ENCODE measurements at regions of chr6 and their contacts with region 1.

Region 1: GRCh38 chr6:38493931-38494547 is 145.7 kb downstream of the BTBD9 start:
- DNase-seq: peak; percentile 52
- ATAC-seq: peak; percentile 69
- H3K4me3 ChIP-seq: no peak overlapping the region
- H3K27ac ChIP-seq: no peak overlapping the region
- H3K4me1 ChIP-seq: 0 out of 2 replicates have a peak, but pooled peaks cover 9% of the 10 kb centered on the region
- H3K27me3 ChIP-seq: no peaks in the 10 kb centered on the region
- CTCF ChIP-seq: peak; percentile 70 to 90 (median 74)
- EP300 ChIP-seq: no peak
- POLR2A ChIP-seq: no peak
- RAD21 ChIP-seq: peak; percentile 98

Region 2: GRCh38 chr6:37717836-37718251 is 776.2 kb before region 1 on chr6:
- CTCF ChIA-PET with region 1: no interaction called
- POLR2A ChIA-PET with region 1: no interaction called
- RAD21 ChIA-PET with region 1: no interaction called
- SMC1A ChIA-PET with region 1: no interaction called
- in situ Hi-C with region 1: loop called (anchors 5 kb)
- intact Hi-C with region 1: no loop called
- DNase-seq: no peak
- ATAC-seq: no peak
- H3K4me3 ChIP-seq: no peak overlapping the region
- H3K27ac ChIP-seq: no peak overlapping the region
- H3K4me1 ChIP-seq: no peaks in the 10 kb centered on the region
- H3K27me3 ChIP-seq: peaks cover 0 to 1% of the 10 kb centered on the region in 2 experiments; a peak in 1 of 4 replicates
- CTCF ChIP-seq: no peak
- EP300 ChIP-seq: no peak
- POLR2A ChIP-seq: no peak
- RAD21 ChIP-seq: no peak

Region 3: GRCh38 chr6:38018755-38019165 is 475.3 kb before region 1 on chr6:
- CTCF ChIA-PET with region 1: interaction called, 12 read pairs
- POLR2A ChIA-PET with region 1: no interaction called
- RAD21 ChIA-PET with region 1: interaction called, 6 read pairs
- SMC1A ChIA-PET with region 1: interaction called, 6 read pairs
- in situ Hi-C with region 1: no loop called
- intact Hi-C with region 1: no loop called
- DNase-seq: no peak
- ATAC-seq: no peak
- H3K4me3 ChIP-seq: no peak overlapping the region
- H3K27ac ChIP-seq: no peak overlapping the region
- H3K4me1 ChIP-seq: no peaks in the 10 kb centered on the region
- H3K27me3 ChIP-seq: no peaks in the 10 kb centered on the region
- CTCF ChIP-seq: 0 out of 6 replicates have a peak, but pooled peaks of 1 of the 3 experiments have one; percentile 1
- EP300 ChIP-seq: no peak
- POLR2A ChIP-seq: no peak
- RAD21 ChIP-seq: no peak

Region 4: GRCh38 chr6:38039502-38039901 is 454.5 kb before region 1 on chr6:
- CTCF ChIA-PET with region 1: interaction called, 63 read pairs
- POLR2A ChIA-PET with region 1: no interaction called
- RAD21 ChIA-PET with region 1: interaction called, 31 read pairs
- SMC1A ChIA-PET with region 1: interaction called, 28 read pairs
- in situ Hi-C with region 1: loop called (anchors 5 kb)
- intact Hi-C with region 1: loop called (anchors 2 kb)
- DNase-seq: no peak
- ATAC-seq: no peak
- H3K4me3 ChIP-seq: no peak overlapping the region
- H3K27ac ChIP-seq: no peak overlapping the region
- H3K4me1 ChIP-seq: no peaks in the 10 kb centered on the region
- H3K27me3 ChIP-seq: no peaks in the 10 kb centered on the region
- CTCF ChIP-seq: no peak
- EP300 ChIP-seq: no peak
- POLR2A ChIP-seq: no peak
- RAD21 ChIP-seq: no peak

Region 5: GRCh38 chr6:38483526-38483925 is 10.5 kb before region 1 on chr6:
- CTCF ChIA-PET with region 1: interaction called, 19 read pairs
- POLR2A ChIA-PET with region 1: interaction called, 6 read pairs
- RAD21 ChIA-PET with region 1: interaction called, 21 read pairs
- SMC1A ChIA-PET with region 1: interaction called, 20 read pairs
- in situ Hi-C with region 1: no loop called
- intact Hi-C with region 1: no loop called
- DNase-seq: peak; percentile 57
- ATAC-seq: peak; percentile 95
- H3K4me3 ChIP-seq: no peak overlapping the region
- H3K27ac ChIP-seq: peak overlapping the region; percentile 58; the same call in 1 of the 2 replicates
- H3K4me1 ChIP-seq: peaks cover 20% of the 10 kb centered on the region
- H3K27me3 ChIP-seq: no peaks in the 10 kb centered on the region
- CTCF ChIP-seq: no peak
- EP300 ChIP-seq: no peak
- POLR2A ChIP-seq: no peak
- RAD21 ChIP-seq: no peak

Region 6: GRCh38 chr6:38524436-38525145 is 30.6 kb after region 1 on chr6:
- CTCF ChIA-PET with region 1: interaction called, 10 read pairs
- POLR2A ChIA-PET with region 1: no interaction called
- RAD21 ChIA-PET with region 1: no interaction called
- SMC1A ChIA-PET with region 1: interaction called, 4 read pairs
- in situ Hi-C with region 1: no loop called
- intact Hi-C with region 1: no loop called
- DNase-seq: no peak
- ATAC-seq: peak; percentile 22; the same call in 2 of the 3 replicates
- H3K4me3 ChIP-seq: no peak overlapping the region
- H3K27ac ChIP-seq: no peak overlapping the region
- H3K4me1 ChIP-seq: no peaks in the 10 kb centered on the region
- H3K27me3 ChIP-seq: no peaks in the 10 kb centered on the region
- CTCF ChIP-seq: no peak
- EP300 ChIP-seq: no peak
- POLR2A ChIP-seq: no peak
- RAD21 ChIP-seq: no peak

Region 7: GRCh38 chr6:38973178-38974054 is 479.4 kb after region 1 on chr6:
- CTCF ChIA-PET with region 1: no interaction called
- POLR2A ChIA-PET with region 1: no interaction called
- RAD21 ChIA-PET with region 1: no interaction called
- SMC1A ChIA-PET with region 1: no interaction called
- in situ Hi-C with region 1: no loop called
- intact Hi-C with region 1: no loop called
- DNase-seq: peak; percentile 9
- ATAC-seq: peak; percentile 88
- H3K4me3 ChIP-seq: no peak overlapping the region
- H3K27ac ChIP-seq: no peak overlapping the region
- H3K4me1 ChIP-seq: no peaks in the 10 kb centered on the region
- H3K27me3 ChIP-seq: no peaks in the 10 kb centered on the region; a peak in 1 of 4 replicates
- CTCF ChIP-seq: peak; percentile 62 to 71 (median 64)
- EP300 ChIP-seq: no peak
- POLR2A ChIP-seq: no peak
- RAD21 ChIP-seq: peak; percentile 61

Measured in GM12878 (cell line).